Right ventricle myocardium inferior (tissue), 1 donor: ENCODE measurements at regions of chr15 and their contacts with region 1.

Region 1: GRCh38 chr15:98740295-98740694 is 92.0 kb downstream of the IGF1R start:
- DNase-seq: no peak
- ATAC-seq: no peak

Region 2: GRCh38 chr15:98689431-98689861 is 50.8 kb before region 1 on chr15:
- intact Hi-C with region 1: no loop called
- DNase-seq: no peak
- ATAC-seq: no peak

Region 3: DNA sequence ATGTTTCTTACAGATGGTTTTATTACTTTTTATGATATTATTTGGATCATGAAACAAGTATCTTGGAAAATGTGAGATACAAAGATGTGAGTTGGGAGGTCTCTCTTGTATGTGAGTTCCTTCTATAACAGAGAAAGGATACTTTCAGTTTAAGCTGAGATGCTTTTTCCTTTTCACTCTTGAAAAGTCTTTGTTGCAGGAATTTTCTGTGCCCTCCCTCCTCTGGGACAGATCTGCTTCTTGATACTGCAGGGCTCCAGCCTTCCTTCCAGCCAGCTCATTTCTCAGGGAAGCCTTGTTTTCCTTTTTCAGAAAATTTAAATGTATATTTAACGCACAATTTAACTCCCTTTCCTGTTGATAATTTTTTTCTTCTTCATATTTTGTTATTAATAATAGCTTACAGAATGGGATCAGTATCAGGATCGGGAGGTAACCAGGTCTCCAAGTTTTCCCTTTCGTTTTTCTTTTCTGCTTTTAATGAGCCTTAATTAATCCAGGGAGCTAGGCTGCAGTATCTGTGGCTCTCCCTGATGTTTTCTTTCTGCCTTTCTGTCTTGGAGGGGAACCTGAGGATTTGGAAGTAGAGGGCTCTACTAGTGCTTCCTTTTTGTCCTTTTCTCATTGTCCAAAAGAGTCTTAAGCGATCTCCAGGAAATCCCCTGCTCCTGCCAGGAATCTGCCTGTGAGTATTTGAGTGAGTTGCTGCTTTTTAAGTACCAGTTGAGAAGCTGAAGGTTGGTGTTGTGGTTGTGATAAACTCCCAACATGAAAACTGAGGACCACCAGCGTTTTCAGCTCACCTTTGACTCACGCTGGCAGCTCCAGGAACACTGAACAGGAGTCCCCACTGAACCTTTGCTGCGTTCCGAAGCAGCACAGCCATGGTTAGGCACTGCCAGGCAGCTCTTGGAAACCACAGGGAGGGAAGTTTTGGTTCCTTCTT is 13.7 kb after region 1 on chr15:
- intact Hi-C with region 1: loop called (anchors 2 kb)
- DNase-seq: no peak
- ATAC-seq: no peak

Region 4: DNA sequence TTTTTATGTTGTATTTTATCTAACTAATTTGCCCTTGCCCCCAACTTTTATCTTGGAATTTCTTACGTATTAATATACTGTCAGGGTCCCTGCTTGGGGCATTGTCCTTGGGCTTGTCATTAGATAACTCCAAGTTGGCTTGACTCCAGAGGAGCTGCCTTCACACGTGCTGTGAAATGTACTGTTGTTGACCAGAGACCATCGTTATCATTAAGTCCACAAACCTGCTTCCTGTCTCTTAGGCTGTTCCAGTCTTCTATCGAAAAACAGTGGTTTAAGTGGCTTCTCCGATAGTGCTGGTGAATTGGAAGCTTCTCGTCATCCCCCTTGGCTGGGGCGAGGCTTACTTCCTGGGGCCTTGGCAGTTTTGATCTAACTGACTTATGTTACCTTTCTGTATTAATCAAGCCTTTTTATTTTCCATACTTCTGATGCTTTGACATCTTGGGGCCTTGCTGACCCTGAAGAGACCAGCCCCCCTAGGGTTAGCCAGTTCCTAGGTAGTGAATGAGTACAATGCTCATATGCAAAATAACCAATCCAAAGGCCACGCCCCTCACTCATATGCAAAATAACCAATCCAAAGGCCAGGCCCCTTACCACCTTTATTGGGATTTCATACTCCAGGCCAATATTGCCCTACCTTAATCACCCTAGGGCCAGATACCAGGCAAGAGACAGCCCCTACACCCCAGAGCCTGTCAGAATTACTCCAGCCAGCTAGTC is 72.6 kb after region 1 on chr15:
- intact Hi-C with region 1: no loop called
- DNase-seq: no peak
- ATAC-seq: no peak